Mammary epithelial cell (primary cell): ENCODE measurements at regions of chr5 and their contacts with region 1.

Region 1: DNA sequence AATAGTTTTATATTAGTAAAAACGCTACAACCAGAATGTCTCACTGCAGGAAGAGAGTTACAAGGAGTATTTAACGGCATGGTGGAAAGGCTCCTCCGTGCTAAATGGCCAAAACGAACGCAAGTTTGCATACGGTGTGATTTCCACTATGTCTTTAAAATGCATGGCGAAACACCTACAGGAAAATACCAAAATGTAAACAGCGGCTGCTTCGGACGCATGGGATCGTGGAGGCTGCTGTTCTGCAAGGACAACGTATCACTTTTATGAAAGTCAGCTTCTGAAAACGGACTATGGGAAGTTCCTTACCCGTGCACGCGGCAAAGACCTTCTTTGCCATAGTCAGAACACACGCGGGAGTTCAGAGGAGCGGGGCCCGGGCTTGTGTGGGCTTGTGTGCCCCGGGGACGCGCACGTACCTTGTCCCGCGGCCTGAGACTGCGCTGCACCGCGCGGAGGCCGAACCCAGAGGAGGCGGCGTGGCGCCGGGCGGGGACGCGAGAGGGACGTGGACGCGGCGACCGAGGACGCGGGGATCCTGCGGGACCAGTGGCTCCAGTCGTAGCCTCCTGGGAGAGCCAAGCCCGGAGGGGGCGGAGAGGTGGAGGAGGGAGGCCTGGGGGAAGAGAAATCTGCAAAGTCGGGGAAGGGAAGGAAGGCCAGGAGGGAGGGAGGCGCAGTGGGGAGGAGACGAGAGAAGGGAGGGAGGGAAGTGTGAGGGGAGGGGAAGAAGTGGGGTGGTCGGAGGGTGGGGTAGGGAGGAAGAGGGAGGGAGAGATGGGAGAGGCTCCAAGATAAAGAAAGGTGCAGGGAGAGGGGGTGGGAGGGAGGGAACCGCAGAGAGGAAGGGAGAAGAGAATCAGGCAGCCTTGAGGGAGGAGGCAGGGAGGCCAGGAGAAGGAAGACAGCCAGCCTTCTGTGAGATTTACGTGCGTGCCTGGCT is at the start of gene CMBL:
- DNase-seq: peak; percentile 76
- H3K4me3 ChIP-seq: peak within 1 kb of the TSS; percentile 69 to 74 (median 70)
- H3K27ac ChIP-seq: peak within 1 kb of the TSS; percentile 30
- H3K4me1 ChIP-seq: peaks cover 28% of the 10 kb centered on the region
- H3K27me3 ChIP-seq: no peaks in the 10 kb centered on the region
- CTCF ChIP-seq: no peak
- total RNA-seq, gene CMBL: 2.5 to 17.3 TPM

Region 2: DNA sequence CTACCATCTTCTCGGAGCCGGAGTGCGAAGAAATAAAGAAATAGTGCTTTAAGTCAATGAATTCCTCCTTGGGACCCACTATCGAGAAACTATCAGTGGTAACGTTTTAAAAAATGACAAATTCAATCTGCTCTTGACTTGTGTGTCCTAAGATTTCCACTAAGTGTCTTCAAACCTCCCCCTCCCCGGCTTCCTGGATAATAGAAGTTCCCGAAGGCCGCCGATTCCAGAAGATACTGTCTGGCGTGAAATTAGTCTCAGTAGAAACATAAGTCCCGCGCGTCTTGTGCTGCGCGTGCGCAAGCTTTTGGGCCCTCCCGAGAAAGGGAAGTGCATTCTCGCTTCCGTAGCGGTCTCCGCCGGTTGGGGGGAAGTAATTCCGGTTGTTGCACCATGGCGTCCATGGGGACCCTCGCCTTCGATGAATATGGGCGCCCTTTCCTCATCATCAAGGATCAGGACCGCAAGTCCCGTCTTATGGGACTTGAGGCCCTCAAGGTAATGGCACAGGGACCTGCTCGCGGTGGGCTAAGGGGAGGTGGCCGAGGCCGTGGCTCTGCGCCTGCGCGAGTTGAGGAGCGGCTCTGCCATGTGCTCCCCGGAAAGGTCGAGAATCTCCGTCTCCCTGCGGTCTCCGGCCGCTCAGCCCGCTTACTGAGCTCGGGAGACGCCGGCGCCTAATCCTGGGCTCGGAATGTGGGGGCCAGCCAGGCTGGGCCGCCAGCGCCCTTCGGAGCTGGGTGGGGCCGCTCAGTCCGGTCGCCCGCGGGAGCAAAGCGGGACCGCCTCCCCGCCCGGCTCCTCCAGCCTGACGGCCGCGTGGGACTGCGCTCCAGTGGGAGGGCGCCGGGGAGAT is 57.3 kb before region 1 on chr5 and contains the start of gene CCT5:
- CTCF ChIA-PET with region 1: no interaction called
- dilution Hi-C with region 1: loop called (anchors 10 kb)
- in situ Hi-C with region 1: no loop called
- intact Hi-C with region 1: no loop called
- DNase-seq: peak; percentile 95
- H3K4me3 ChIP-seq: peak within 1 kb of the TSS; percentile 81 to 89 (median 87)
- H3K27ac ChIP-seq: peak within 1 kb of the TSS; percentile 98
- H3K4me1 ChIP-seq: peaks cover 9% of the 10 kb centered on the region
- H3K27me3 ChIP-seq: no peaks in the 10 kb centered on the region
- CTCF ChIP-seq: no peak
- total RNA-seq, gene CCT5: 270 to 303 TPM

Region 3: GRCh38 chr5:10353241-10354047 is 46.0 kb after region 1 on chr5 and contains the start of gene MARCHF6:
- CTCF ChIA-PET with region 1: no interaction called
- dilution Hi-C with region 1: no loop called
- in situ Hi-C with region 1: no loop called
- intact Hi-C with region 1: loop called (anchors 1 kb)
- DNase-seq: peak; percentile 98
- H3K4me3 ChIP-seq: peak within 1 kb of the TSS; percentile 85 to 99 (median 94)
- H3K27ac ChIP-seq: peak within 1 kb of the TSS; percentile 94
- H3K4me1 ChIP-seq: peaks cover 25% of the 10 kb centered on the region
- H3K27me3 ChIP-seq: no peaks in the 10 kb centered on the region
- CTCF ChIP-seq: no peak
- total RNA-seq, gene MARCHF6: 91.0 to 110 TPM